ENCODE measurements at regions of chr5 and their contacts with region 1.

Region 1: GRCh38 chr5:37837414-37838032 is 2.3 kb downstream of the GDNF start:
- DNase-seq: peak; percentile 79
- H3K4me3 ChIP-seq: peak overlapping the region; percentile 37 to 59 (median 57)
- H3K27ac ChIP-seq: no peak overlapping the region
- H3K4me1 ChIP-seq: peaks cover 41% of the 10 kb centered on the region
- H3K27me3 ChIP-seq: no peaks in the 10 kb centered on the region
- CTCF ChIP-seq: peak; percentile 69 to 93

Region 2: GRCh38 chr5:37495210-37495609 is 342.3 kb before region 1 on chr5:
- CTCF ChIA-PET with region 1: no interaction called
- dilution Hi-C with region 1: no loop called
- in situ Hi-C with region 1: no loop called
- intact Hi-C with region 1: loop called (anchors 5 kb)
- DNase-seq: peak; percentile 14
- H3K4me3 ChIP-seq: no peak overlapping the region
- H3K27ac ChIP-seq: no peak overlapping the region
- H3K4me1 ChIP-seq: peaks cover 14% of the 10 kb centered on the region
- H3K27me3 ChIP-seq: no peaks in the 10 kb centered on the region
- CTCF ChIP-seq: peak in 1 of 2 donors; percentile 29

Region 3: GRCh38 chr5:37889612-37890317 is 52.2 kb after region 1 on chr5:
- CTCF ChIA-PET with region 1: no interaction called
- dilution Hi-C with region 1: no loop called
- in situ Hi-C with region 1: no loop called
- intact Hi-C with region 1: loop called (anchors 2 kb)
- DNase-seq: peak; percentile 99
- H3K4me3 ChIP-seq: no peak overlapping the region
- H3K27ac ChIP-seq: peak overlapping the region; percentile 81
- H3K4me1 ChIP-seq: peaks cover 31% of the 10 kb centered on the region
- H3K27me3 ChIP-seq: no peaks in the 10 kb centered on the region
- CTCF ChIP-seq: no peak

Region 4: GRCh38 chr5:37926732-37927131 is 89.2 kb after region 1 on chr5:
- CTCF ChIA-PET with region 1: no interaction called
- dilution Hi-C with region 1: no loop called
- in situ Hi-C with region 1: no loop called
- intact Hi-C with region 1: loop called (anchors 1 kb)
- DNase-seq: peak; percentile 74
- H3K4me3 ChIP-seq: no peak overlapping the region
- H3K27ac ChIP-seq: no peak overlapping the region
- H3K4me1 ChIP-seq: peaks cover 10% of the 10 kb centered on the region
- H3K27me3 ChIP-seq: no peaks in the 10 kb centered on the region
- CTCF ChIP-seq: peak in 1 of 2 donors; percentile 47

Region 5: DNA sequence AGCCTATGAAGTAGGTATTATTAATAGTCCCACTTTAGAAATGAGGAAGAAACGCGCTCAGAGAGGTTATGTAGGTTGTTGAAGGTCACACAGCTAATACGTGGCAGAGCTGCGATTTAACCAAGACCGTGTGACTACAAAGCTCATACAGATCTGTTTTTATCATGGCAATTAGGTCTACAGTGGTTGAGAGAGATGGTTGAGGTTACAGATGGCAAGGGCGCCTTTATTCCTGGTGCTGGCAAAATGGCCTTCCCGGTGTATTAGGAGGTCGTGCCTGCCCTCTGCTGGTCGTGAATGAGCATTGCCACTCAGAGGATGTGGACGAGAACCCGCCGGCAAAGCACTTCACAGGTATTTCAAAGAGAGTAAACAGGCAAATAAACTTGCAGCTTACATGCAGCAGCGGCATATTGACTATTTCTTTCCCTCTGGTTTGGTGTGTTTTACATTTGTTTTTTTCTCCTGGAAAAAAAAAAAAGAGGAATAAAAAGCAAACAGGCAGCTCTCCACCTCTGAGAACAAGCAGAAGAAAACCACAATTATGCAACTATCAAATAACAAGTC is 355.6 kb after region 1 on chr5:
- CTCF ChIA-PET with region 1: interaction called, 7 read pairs
- dilution Hi-C with region 1: no loop called
- in situ Hi-C with region 1: loop called (anchors 5 kb)
- intact Hi-C with region 1: loop called (anchors 1 kb)
- DNase-seq: peak; percentile 38
- H3K4me3 ChIP-seq: no peak overlapping the region
- H3K27ac ChIP-seq: no peak overlapping the region
- H3K4me1 ChIP-seq: no peaks in the 10 kb centered on the region
- H3K27me3 ChIP-seq: no peaks in the 10 kb centered on the region
- CTCF ChIP-seq: peak; percentile 90 to 92

Measured in mammary epithelial cell (primary cell).